ENCODE measurements at regions of chr7 and their contacts with region 1.

Region 1: GRCh38 chr7:33547880-33548279 is 357.5 kb upstream of the BMPER start:
- DNase-seq: peak; percentile 40
- H3K4me3 ChIP-seq: no peak overlapping the region
- H3K27ac ChIP-seq: no peak overlapping the region
- H3K4me1 ChIP-seq: peaks cover 5% of the 10 kb centered on the region
- H3K27me3 ChIP-seq: no peaks in the 10 kb centered on the region
- CTCF ChIP-seq: no peak
- POLR2A ChIP-seq: no peak

Region 2: GRCh38 chr7:33536398-33537103 is 11.3 kb before region 1 on chr7:
- CTCF ChIA-PET with region 1: interaction called, 13 read pairs
- POLR2A ChIA-PET with region 1: no interaction called
- dilution Hi-C with region 1: no loop called
- intact Hi-C with region 1: no loop called
- DNase-seq: no peak
- H3K4me3 ChIP-seq: no peak overlapping the region
- H3K27ac ChIP-seq: no peak overlapping the region
- H3K4me1 ChIP-seq: no peaks in the 10 kb centered on the region
- H3K27me3 ChIP-seq: no peaks in the 10 kb centered on the region
- CTCF ChIP-seq: no peak
- POLR2A ChIP-seq: no peak

Region 3: DNA sequence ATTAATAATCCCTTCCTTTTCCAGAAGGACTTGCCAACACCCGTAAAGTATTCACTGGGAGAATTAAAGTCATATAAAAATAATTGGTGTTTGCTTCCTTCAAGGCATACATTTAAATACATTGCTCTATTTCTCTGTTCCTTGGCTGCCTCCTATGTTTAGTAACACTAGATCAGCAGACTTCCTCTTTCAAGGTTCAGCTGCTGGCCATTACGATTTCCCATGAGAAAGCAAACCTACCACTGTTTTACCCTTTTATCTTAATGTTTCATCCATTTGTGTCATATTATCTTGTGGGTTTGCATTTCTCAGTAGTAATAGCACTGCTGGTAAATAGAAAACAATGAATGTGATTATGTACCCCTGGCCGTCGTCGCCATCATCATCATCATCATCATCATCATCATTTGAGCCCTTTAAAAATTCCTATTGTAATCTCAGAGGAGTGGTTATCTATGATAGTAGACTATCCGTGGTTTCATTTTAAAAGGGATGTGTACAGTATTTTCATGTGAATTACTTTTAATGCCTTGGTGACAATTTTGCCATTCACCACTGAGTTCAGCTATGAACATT is 43.7 kb after region 1 on chr7:
- CTCF ChIA-PET with region 1: no interaction called
- POLR2A ChIA-PET with region 1: no interaction called
- dilution Hi-C with region 1: no loop called
- intact Hi-C with region 1: no loop called
- DNase-seq: peak; percentile 69
- H3K4me3 ChIP-seq: no peak overlapping the region
- H3K27ac ChIP-seq: peak overlapping the region; percentile 27
- H3K4me1 ChIP-seq: peaks cover 17% of the 10 kb centered on the region
- H3K27me3 ChIP-seq: no peaks in the 10 kb centered on the region
- CTCF ChIP-seq: no peak
- POLR2A ChIP-seq: no peak

Measured in endothelial cell of umbilical vein (primary cell).